Body of pancreas (tissue), 4 donors: ENCODE measurements at regions of chr9 and their contacts with region 1.

Region 1: GRCh38 chr9:122307925-122308324 is 43.2 kb downstream of the MRRF start:
- DNase-seq: peak in 1 of 4 donors; percentile 8
- ATAC-seq: no peak
- H3K4me3 ChIP-seq: no peak overlapping the region
- H3K27ac ChIP-seq: no peak overlapping the region
- H3K4me1 ChIP-seq: no peaks in the 10 kb centered on the region
- H3K27me3 ChIP-seq: no peaks in the 10 kb centered on the region
- CTCF ChIP-seq: no peak
- POLR2A ChIP-seq: no peak

Region 2: DNA sequence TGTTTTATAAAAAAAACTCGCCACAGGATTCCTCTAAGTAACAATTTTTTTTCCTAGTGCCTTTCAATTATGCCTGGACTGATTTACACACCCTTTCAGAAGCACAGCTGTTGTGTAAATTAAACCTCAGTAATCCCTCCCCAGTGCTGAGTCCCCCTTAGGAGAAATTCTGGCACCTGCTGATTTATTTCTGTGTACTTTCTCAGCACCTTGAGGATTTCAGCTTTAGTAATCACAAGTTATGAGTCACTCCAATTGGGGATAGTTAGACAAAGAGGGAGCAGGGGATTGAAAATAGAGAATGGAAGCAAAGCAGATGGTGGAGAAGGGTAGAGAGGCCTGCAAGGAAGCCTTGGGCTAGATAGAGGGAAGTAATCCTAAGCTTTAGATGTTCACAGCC is 386.5 kb before region 1 on chr9:
- intact Hi-C with region 1: no loop called
- DNase-seq: no peak
- ATAC-seq: no peak
- H3K4me3 ChIP-seq: no peak overlapping the region
- H3K27ac ChIP-seq: no peak overlapping the region
- H3K4me1 ChIP-seq: no peaks in the 10 kb centered on the region
- H3K27me3 ChIP-seq: no peaks in the 10 kb centered on the region
- CTCF ChIP-seq: no peak
- POLR2A ChIP-seq: no peak

Region 3: GRCh38 chr9:122252796-122253195 is 55.1 kb before region 1 on chr9:
- intact Hi-C with region 1: loop called (anchors 10 kb)
- DNase-seq: no peak
- ATAC-seq: no peak
- H3K4me3 ChIP-seq: no peak overlapping the region
- H3K27ac ChIP-seq: no peak overlapping the region
- H3K4me1 ChIP-seq: no peaks in the 10 kb centered on the region
- H3K27me3 ChIP-seq: no peaks in the 10 kb centered on the region
- CTCF ChIP-seq: no peak
- POLR2A ChIP-seq: no peak